CD14-positive monocyte (primary cell): ENCODE measurements at regions of chr6 and their contacts with region 1.

Region 1: DNA sequence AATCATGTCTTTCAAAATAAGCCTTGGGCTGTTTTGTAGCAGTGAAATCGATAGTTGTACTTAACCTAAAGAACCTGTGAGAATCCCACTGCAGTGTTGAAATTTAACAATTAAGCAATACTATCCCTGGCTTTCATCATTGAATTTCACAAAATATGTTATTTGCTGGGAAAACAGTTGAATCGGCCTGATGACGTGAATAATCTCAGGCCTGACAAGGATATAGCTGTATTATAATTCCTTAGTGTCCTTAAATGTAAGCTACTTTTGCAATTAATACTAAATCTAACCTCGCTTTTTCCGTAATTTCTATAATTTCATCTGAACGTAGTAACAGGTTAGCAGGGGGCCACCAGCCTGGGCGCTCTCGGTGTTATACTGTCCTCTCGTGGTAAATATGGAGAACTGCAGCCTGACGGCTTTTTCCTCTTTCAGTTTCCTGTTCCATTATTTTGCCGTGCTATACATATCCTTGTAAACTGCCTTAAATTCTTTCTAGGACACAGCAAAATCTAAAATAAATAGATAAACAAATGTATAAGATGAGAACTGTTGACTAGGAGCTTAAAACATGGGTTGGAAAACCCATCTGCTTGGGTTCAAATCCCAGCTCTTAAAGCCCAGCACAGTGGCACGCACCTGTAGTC is 24.0 kb downstream of the MTFR2 start:
- DNase-seq: peak; percentile 43 to 73 (median 60)
- H3K4me3 ChIP-seq: peak overlapping the region in 2 of 3 experiments; percentile 37 to 66
- H3K4me3 Mint-ChIP-seq: peak overlapping the region; percentile 43 to 55
- H3K27ac ChIP-seq: no peak overlapping the region
- H3K27ac Mint-ChIP-seq: peak overlapping the region in 4 of 7 donors; percentile 10 to 61 (median 40)
- H3K4me1 ChIP-seq: peaks cover 42 to 46% of the 10 kb centered on the region in 2 donors
- H3K4me1 Mint-ChIP-seq: peaks cover 56% of the 10 kb centered on the region
- H3K27me3 ChIP-seq: no peaks in the 10 kb centered on the region
- H3K27me3 Mint-ChIP-seq: no peaks in the 10 kb centered on the region
- CTCF ChIP-seq: peak; percentile 100

Region 2: DNA sequence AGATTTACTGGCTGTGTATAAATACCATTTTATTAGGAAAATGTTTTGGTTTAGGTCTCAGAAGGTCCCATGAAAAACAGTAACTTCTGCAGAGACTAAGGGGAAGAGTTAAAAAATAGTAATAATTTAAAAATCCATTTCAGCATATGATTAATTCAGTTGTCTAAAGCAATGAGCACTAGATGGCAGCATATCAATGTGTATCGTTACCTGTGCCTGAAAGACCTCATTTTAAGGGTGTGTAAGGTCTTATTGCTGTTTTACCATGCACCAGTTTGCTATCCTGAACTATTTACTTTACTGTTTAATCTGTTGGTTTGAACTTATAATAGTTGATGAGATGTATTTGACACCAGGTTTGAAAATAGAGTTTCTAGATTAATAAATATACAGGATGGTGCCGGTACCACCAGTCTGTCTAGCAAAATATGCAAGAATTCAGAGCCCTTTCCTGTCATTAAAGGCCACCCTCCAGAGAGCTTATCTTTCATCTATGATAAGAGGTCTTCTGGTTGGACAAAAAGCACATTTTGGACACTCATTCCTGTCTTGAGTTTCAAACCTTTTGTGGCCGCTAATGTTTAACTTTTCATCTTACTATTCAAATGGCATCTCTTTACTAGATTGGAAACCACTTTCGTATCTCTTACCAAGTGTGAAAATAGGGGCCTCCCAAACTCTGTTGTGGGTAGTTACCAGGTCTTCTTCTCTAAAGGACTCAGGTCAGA is 719.7 kb before region 1 on chr6:
- intact Hi-C with region 1: loop called in 1 of 2 experiments (anchors 10 kb)
- DNase-seq: peak in 2 of 3 donors; percentile 28 to 49
- H3K4me3 ChIP-seq: no peak overlapping the region
- H3K4me3 Mint-ChIP-seq: no peak overlapping the region
- H3K27ac ChIP-seq: no peak overlapping the region
- H3K27ac Mint-ChIP-seq: no peak overlapping the region
- H3K4me1 ChIP-seq: no peaks in the 10 kb centered on the region
- H3K4me1 Mint-ChIP-seq: no peaks in the 10 kb centered on the region
- H3K27me3 ChIP-seq: no peaks in the 10 kb centered on the region
- H3K27me3 Mint-ChIP-seq: no peaks in the 10 kb centered on the region
- CTCF ChIP-seq: peak; percentile 65

Region 3: DNA sequence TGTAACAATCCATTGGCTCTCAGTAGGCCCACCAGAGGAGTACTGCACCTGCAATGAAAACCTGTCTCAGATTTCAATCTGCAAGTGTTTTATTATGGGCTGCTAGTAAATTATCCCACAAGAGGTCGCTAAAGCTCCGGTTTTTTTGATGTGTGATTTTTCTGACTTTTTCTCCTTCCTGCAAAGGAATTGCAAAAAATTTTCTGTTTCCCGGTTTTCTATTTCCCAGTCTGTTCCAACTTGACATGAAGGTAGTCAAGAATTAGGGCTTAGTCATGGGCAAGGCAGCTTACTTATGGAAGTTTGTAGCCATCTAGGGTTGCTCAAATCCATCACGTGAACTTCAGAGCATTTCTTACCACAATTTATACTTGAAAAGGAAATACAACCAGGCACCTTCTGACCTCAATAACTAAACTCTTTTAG is 690.1 kb before region 1 on chr6:
- intact Hi-C with region 1: loop called in 1 of 2 experiments (anchors 10 kb)
- DNase-seq: peak in 2 of 3 donors; percentile 11 to 27
- H3K4me3 ChIP-seq: no peak overlapping the region
- H3K4me3 Mint-ChIP-seq: no peak overlapping the region
- H3K27ac ChIP-seq: no peak overlapping the region
- H3K27ac Mint-ChIP-seq: no peak overlapping the region
- H3K4me1 ChIP-seq: peaks cover 0 to 5% of the 10 kb centered on the region in 2 donors
- H3K4me1 Mint-ChIP-seq: peaks cover 6% of the 10 kb centered on the region
- H3K27me3 ChIP-seq: no peaks in the 10 kb centered on the region
- H3K27me3 Mint-ChIP-seq: no peaks in the 10 kb centered on the region
- CTCF ChIP-seq: peak; percentile 59

Region 4: DNA sequence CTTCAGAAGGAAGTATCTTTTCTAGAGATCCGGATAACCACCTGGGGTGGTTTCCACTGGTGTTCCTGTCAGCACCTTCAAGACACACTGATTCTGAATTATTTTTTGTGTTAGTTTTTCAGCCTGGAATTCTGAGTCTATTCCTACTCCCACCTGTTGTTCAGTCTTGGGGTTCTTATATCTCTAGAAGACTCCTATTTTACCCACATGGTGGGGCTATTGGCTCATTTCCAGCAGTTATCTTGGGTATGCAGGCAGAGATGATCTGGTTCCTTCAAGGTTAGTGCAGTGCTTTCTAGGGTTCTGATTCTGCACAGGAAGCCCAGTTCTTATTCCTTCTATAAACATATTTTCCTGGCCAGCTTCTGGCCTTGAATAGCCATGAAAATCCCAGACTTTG is 550.3 kb before region 1 on chr6:
- intact Hi-C with region 1: loop called (anchors 5 to 10 kb)
- DNase-seq: peak; percentile 14 to 40 (median 38)
- H3K4me3 ChIP-seq: no peak overlapping the region
- H3K4me3 Mint-ChIP-seq: no peak overlapping the region
- H3K27ac ChIP-seq: no peak overlapping the region
- H3K27ac Mint-ChIP-seq: no peak overlapping the region
- H3K4me1 ChIP-seq: no peaks in the 10 kb centered on the region
- H3K4me1 Mint-ChIP-seq: no peaks in the 10 kb centered on the region
- H3K27me3 ChIP-seq: no peaks in the 10 kb centered on the region
- H3K27me3 Mint-ChIP-seq: peaks cover 0 to 3% (median 2%) of the 10 kb centered on the region in 3 donors
- CTCF ChIP-seq: peak; percentile 49

Region 5: GRCh38 chr6:136208783-136209182 is 17.4 kb before region 1 on chr6:
- intact Hi-C with region 1: no loop called
- DNase-seq: no peak
- H3K4me3 ChIP-seq: no peak overlapping the region
- H3K4me3 Mint-ChIP-seq: no peak overlapping the region
- H3K27ac ChIP-seq: no peak overlapping the region
- H3K27ac Mint-ChIP-seq: no peak overlapping the region
- H3K4me1 ChIP-seq: no peaks in the 10 kb centered on the region
- H3K4me1 Mint-ChIP-seq: no peaks in the 10 kb centered on the region
- H3K27me3 ChIP-seq: no peaks in the 10 kb centered on the region
- H3K27me3 Mint-ChIP-seq: no peaks in the 10 kb centered on the region
- CTCF ChIP-seq: no peak